ENCODE measurements at regions of chr3 and their contacts with region 1.

Region 1: GRCh38 chr3:163011590-163011989 is 1515.0 kb downstream of the OTOL1 start:
- DNase-seq: no peak
- H3K4me3 ChIP-seq: no peak overlapping the region
- H3K4me3 Mint-ChIP-seq: no peak overlapping the region
- H3K27ac ChIP-seq: no peak overlapping the region
- H3K27ac Mint-ChIP-seq: no peak overlapping the region
- H3K4me1 ChIP-seq: no peaks in the 10 kb centered on the region
- H3K4me1 Mint-ChIP-seq: no peaks in the 10 kb centered on the region
- H3K27me3 ChIP-seq: no peaks in the 10 kb centered on the region
- H3K27me3 Mint-ChIP-seq: no peaks in the 10 kb centered on the region

Region 2: DNA sequence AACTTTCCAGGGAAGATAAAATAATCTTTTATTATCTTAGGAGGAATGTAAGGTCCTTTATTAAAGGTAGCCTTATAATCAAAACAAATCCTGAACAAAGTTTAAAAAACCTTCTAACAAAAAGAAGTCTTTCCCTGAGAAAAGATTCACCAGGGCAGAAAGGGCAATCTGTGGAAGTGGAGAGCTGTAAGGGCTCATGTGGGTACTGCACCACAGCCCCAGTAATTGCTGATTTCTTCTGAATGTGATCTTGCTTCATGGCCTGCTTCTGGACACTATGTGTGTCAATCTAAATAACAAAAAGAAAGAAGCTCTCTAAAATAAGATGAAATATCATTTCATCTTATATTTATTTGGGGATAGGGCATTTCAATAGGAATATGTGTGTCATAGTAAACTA is 13.4 kb before region 1 on chr3:
- CTCF ChIA-PET with region 1: no interaction called
- POLR2A ChIA-PET with region 1: no interaction called
- intact Hi-C with region 1: loop called (anchors 1 kb)
- DNase-seq: no peak
- H3K4me3 ChIP-seq: no peak overlapping the region
- H3K4me3 Mint-ChIP-seq: no peak overlapping the region
- H3K27ac ChIP-seq: no peak overlapping the region
- H3K27ac Mint-ChIP-seq: no peak overlapping the region
- H3K4me1 ChIP-seq: no peaks in the 10 kb centered on the region
- H3K4me1 Mint-ChIP-seq: no peaks in the 10 kb centered on the region
- H3K27me3 ChIP-seq: no peaks in the 10 kb centered on the region
- H3K27me3 Mint-ChIP-seq: no peaks in the 10 kb centered on the region

Region 3: GRCh38 chr3:163196815-163197374 is 185.3 kb after region 1 on chr3:
- CTCF ChIA-PET with region 1: no interaction called
- POLR2A ChIA-PET with region 1: no interaction called
- intact Hi-C with region 1: no loop called
- DNase-seq: no peak
- H3K4me3 ChIP-seq: no peak overlapping the region
- H3K4me3 Mint-ChIP-seq: no peak overlapping the region
- H3K27ac ChIP-seq: no peak overlapping the region
- H3K27ac Mint-ChIP-seq: no peak overlapping the region
- H3K4me1 ChIP-seq: no peaks in the 10 kb centered on the region
- H3K4me1 Mint-ChIP-seq: no peaks in the 10 kb centered on the region
- H3K27me3 ChIP-seq: no peaks in the 10 kb centered on the region
- H3K27me3 Mint-ChIP-seq: no peaks in the 10 kb centered on the region